ENCODE measurements at regions of chr11 and their contacts with region 1.

Region 1: GRCh38 chr11:69670158-69670845 is 4.9 kb downstream of the LTO1 start:
- DNase-seq: peak; percentile 78 to 86 (median 80)
- ATAC-seq: peak; percentile 79
- H3K4me3 ChIP-seq: no peak overlapping the region
- H3K27ac ChIP-seq: no peak overlapping the region
- H3K4me1 ChIP-seq: peaks cover 9 to 18% of the 10 kb centered on the region in 2 experiments; a peak in 4 of 5 replicates
- H3K27me3 ChIP-seq: no peaks in the 10 kb centered on the region
- CTCF ChIP-seq: peak; percentile 84 to 95 (median 89)
- EP300 ChIP-seq: no peak
- POLR2A ChIP-seq: no peak
- RAD21 ChIP-seq: peak; percentile 58 to 74

Region 2: GRCh38 chr11:68806921-68807844 is 863.1 kb before region 1 on chr11:
- CTCF ChIA-PET with region 1: no interaction called
- POLR2A ChIA-PET with region 1: no interaction called
- in situ Hi-C with region 1: no loop called
- intact Hi-C with region 1: no loop called
- DNase-seq: no peak
- ATAC-seq: no peak
- H3K4me3 ChIP-seq: no peak overlapping the region
- H3K27ac ChIP-seq: no peak overlapping the region
- H3K4me1 ChIP-seq: peaks cover 0 to 8% of the 10 kb centered on the region in 2 experiments; a peak in 2 of 5 replicates
- H3K27me3 ChIP-seq: no peaks in the 10 kb centered on the region
- CTCF ChIP-seq: no peak
- EP300 ChIP-seq: no peak
- POLR2A ChIP-seq: no peak
- RAD21 ChIP-seq: no peak

Region 3: GRCh38 chr11:68839054-68839865 is 831.0 kb before region 1 on chr11:
- CTCF ChIA-PET with region 1: no interaction called
- POLR2A ChIA-PET with region 1: no interaction called
- in situ Hi-C with region 1: loop called (anchors 25 kb)
- intact Hi-C with region 1: no loop called
- DNase-seq: peak; percentile 94 to 95 (median 94)
- ATAC-seq: peak; percentile 76
- H3K4me3 ChIP-seq: peak overlapping the region; percentile 47
- H3K27ac ChIP-seq: peak overlapping the region; percentile 79
- H3K4me1 ChIP-seq: peaks cover 18 to 56% of the 10 kb centered on the region in 2 experiments; a peak in 4 of 5 replicates
- H3K27me3 ChIP-seq: no peaks in the 10 kb centered on the region
- CTCF ChIP-seq: no peak
- EP300 ChIP-seq: no peak; the same call in 1 of the 2 replicates
- POLR2A ChIP-seq: peak; percentile 55; the same call in 1 of the 2 replicates
- RAD21 ChIP-seq: no peak

Region 4: DNA sequence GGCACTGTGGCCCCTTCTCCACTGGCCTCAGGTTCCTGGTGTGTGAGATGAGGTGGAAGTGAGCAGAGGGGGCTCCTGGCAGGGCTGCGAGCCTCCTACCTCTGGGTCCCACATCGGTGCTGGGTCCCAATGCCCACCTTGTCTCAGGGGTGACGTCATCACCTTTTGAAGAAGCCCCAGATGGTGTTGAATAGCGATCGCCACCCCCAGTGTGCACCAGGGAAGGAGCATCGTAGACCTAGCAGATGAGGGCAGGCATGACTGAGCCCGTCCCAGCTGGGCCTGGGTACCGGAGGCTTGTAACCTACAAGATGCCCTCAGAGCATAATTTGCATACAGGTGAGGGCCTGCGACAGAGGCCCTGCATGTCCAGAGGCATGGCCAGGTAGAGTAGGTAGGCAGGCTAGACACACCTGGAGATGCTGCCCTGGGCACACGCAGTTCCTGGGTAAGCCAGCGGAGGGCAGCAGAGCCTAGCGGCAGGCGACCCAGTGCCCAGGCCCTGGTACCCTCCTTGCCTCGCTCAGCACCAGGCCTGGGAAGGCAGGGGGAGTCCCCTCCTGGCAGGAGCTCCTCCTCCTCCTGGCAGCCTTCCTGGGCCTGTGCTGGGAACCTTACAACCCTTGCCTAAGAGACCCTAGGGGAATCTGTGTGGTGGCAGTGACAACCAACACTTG is 569.0 kb before region 1 on chr11:
- CTCF ChIA-PET with region 1: interaction called, 15 read pairs
- POLR2A ChIA-PET with region 1: interaction called, 3 read pairs
- in situ Hi-C with region 1: loop called (anchors 5 kb)
- intact Hi-C with region 1: loop called (anchors 5 kb)
- DNase-seq: peak; percentile 51 to 82 (median 76)
- ATAC-seq: peak; percentile 88
- H3K4me3 ChIP-seq: no peak overlapping the region
- H3K27ac ChIP-seq: no peak overlapping the region
- H3K4me1 ChIP-seq: peaks cover 0 to 13% of the 10 kb centered on the region in 2 experiments; a peak in 2 of 5 replicates
- H3K27me3 ChIP-seq: peaks cover 12 to 85% of the 10 kb centered on the region in 2 experiments; a peak in 4 of 5 replicates
- CTCF ChIP-seq: peak; percentile 87 to 95 (median 88)
- EP300 ChIP-seq: no peak
- POLR2A ChIP-seq: no peak
- RAD21 ChIP-seq: peak; percentile 90 to 96

Region 5: GRCh38 chr11:69658626-69659450 is 11.5 kb before region 1 on chr11:
- CTCF ChIA-PET with region 1: no interaction called
- POLR2A ChIA-PET with region 1: interaction called, 10 read pairs
- in situ Hi-C with region 1: no loop called
- intact Hi-C with region 1: no loop called
- DNase-seq: no peak
- ATAC-seq: no peak
- H3K4me3 ChIP-seq: no peak overlapping the region
- H3K27ac ChIP-seq: no peak overlapping the region
- H3K4me1 ChIP-seq: peaks cover 0 to 13% of the 10 kb centered on the region in 2 experiments; a peak in 2 of 5 replicates
- H3K27me3 ChIP-seq: peaks cover 0 to 11% of the 10 kb centered on the region in 2 experiments; a peak in 3 of 5 replicates
- CTCF ChIP-seq: no peak
- EP300 ChIP-seq: no peak
- POLR2A ChIP-seq: no peak
- RAD21 ChIP-seq: no peak